GM12878 (cell line): ENCODE measurements at regions of chr6 and their contacts with region 1.

Region 1: GRCh38 chr6:30130887-30131862 is 4.8 kb upstream of the TRIM40 start:
- DNase-seq: peak; percentile 32
- ATAC-seq: peak; percentile 97
- H3K4me3 ChIP-seq: no peak overlapping the region
- H3K27ac ChIP-seq: no peak overlapping the region
- H3K4me1 ChIP-seq: peaks cover 5% of the 10 kb centered on the region
- H3K27me3 ChIP-seq: peaks cover 4 to 10% of the 10 kb centered on the region in 2 experiments
- CTCF ChIP-seq: peak; percentile 98 to 100 (median 100); a peak in 5 of 6 replicates
- EP300 ChIP-seq: no peak
- POLR2A ChIP-seq: no peak
- RAD21 ChIP-seq: peak; percentile 81

Region 2: DNA sequence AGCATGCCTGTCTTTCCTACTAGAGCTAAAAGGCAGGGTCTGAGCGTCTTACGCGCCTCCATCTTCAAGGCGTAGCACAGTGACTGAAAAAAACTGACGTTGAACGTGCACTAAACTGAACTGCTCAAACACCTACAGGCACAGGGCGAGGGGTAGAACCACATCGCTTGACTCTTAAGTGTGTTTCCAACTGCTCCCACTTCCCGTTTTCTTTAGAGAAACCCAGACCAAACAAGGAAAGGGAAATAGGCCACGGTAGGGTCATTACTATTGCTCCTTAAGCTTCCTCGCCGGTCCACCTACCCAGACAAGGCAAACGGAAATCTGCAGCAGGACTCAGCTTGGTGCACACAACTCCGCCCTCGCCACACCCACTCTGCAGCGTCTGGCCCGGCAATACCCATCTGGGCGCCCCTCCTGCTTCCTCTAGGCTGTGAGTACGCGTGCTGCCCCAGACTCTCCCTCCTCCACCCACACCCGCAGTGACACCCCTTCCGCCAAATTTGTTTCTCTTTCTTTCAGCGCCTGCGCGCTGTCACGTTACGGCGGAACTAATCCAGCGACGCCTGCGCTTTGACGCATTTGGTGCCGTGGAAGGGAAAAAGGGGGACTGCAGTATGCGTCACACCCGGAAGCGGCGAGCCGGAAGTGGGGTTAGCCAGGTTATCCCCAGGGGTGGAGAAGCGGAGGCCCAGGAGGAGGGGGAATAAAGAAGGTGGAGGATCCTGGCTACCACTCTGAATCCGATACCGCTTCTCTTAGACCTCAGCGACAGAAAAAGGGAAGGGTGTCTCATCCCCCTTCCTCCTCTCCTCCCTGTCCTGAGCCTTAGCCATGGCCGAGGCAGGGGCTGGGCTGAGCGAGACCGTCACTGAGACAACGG is 64.4 kb before region 1 on chr6 and contains the start of gene PPP1R11:
- CTCF ChIA-PET with region 1: interaction called, 11 read pairs
- POLR2A ChIA-PET with region 1: interaction called, 4 read pairs
- RAD21 ChIA-PET with region 1: interaction called, 14 read pairs
- SMC1A ChIA-PET with region 1: interaction called, 15 read pairs
- in situ Hi-C with region 1: no loop called
- intact Hi-C with region 1: no loop called
- DNase-seq: peak; percentile 99
- ATAC-seq: peak; percentile 99
- H3K4me3 ChIP-seq: peak within 1 kb of the TSS; percentile 84
- H3K27ac ChIP-seq: peak within 1 kb of the TSS; percentile 88
- H3K4me1 ChIP-seq: no peaks in the 10 kb centered on the region
- H3K27me3 ChIP-seq: peaks cover 0 to 3% of the 10 kb centered on the region in 2 experiments; a peak in 2 of 4 replicates
- CTCF ChIP-seq: no peak
- EP300 ChIP-seq: peak in 1 of 2 experiments; percentile 63; a peak in 2 of 4 replicates
- POLR2A ChIP-seq: peak; percentile 91
- RAD21 ChIP-seq: no peak
- polyA plus RNA-seq, gene PPP1R11: 12.6 to 13.4 TPM

Region 3: DNA sequence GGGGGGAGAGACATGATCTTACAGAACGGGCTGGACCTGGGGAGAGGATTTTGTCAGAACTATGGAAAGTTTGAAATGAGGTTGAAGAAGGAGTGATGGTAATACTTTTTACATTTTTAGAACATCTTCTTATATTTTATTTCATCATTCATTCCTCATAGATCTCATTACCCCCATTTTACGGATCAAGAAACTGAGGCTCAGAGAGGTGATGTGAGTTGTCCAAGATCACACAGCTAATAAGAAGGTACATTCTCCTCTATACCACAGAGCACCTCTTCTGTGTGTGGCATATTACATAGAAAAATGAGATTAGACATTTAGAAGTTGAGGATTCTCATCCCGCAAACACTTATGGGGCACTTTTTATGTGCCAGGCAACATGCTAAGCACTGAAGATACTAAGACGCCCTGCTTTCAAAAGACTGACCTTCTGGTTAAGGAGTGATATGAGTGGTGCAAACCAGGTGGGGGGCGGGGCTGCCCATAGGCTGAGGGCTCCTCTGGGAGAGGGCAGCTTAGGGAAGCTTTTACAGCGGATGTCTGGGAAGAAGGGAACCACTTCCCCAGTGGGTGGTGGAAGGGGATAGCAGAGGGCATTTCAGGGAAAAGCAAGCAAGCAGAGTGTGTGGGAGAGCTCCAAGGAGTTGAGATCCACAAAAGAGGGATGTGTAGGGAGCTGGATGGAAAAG is 38.2 kb before region 1 on chr6:
- CTCF ChIA-PET with region 1: interaction called, 16 read pairs
- POLR2A ChIA-PET with region 1: interaction called, 8 read pairs
- RAD21 ChIA-PET with region 1: interaction called, 6 read pairs
- SMC1A ChIA-PET with region 1: interaction called, 13 read pairs
- in situ Hi-C with region 1: no loop called
- intact Hi-C with region 1: no loop called
- DNase-seq: no peak
- ATAC-seq: no peak
- H3K4me3 ChIP-seq: no peak overlapping the region
- H3K27ac ChIP-seq: no peak overlapping the region
- H3K4me1 ChIP-seq: no peaks in the 10 kb centered on the region
- H3K27me3 ChIP-seq: peaks cover 3 to 4% of the 10 kb centered on the region in 2 experiments; a peak in 2 of 4 replicates
- CTCF ChIP-seq: no peak
- EP300 ChIP-seq: no peak
- POLR2A ChIP-seq: no peak
- RAD21 ChIP-seq: no peak

Region 4: GRCh38 chr6:30113003-30113759 is 18.0 kb before region 1 on chr6 and contains the start of gene TRIM31:
- CTCF ChIA-PET with region 1: interaction called, 96 read pairs
- POLR2A ChIA-PET with region 1: interaction called, 43 read pairs
- RAD21 ChIA-PET with region 1: interaction called, 333 read pairs
- SMC1A ChIA-PET with region 1: interaction called, 647 read pairs
- in situ Hi-C with region 1: no loop called
- intact Hi-C with region 1: no loop called
- DNase-seq: peak; percentile 55
- ATAC-seq: peak; percentile 90
- H3K4me3 ChIP-seq: no peak within 1 kb of the TSS
- H3K27ac ChIP-seq: 0 out of 2 replicates have a peak within 1 kb of the TSS, but pooled peaks have one; percentile 11
- H3K4me1 ChIP-seq: peaks cover 22% of the 10 kb centered on the region
- H3K27me3 ChIP-seq: no peaks in the 10 kb centered on the region; a peak in 1 of 4 replicates
- CTCF ChIP-seq: no peak
- EP300 ChIP-seq: 0 out of 4 replicates have a peak, but pooled peaks of 1 of the 2 experiments have one; percentile 39
- POLR2A ChIP-seq: no peak
- RAD21 ChIP-seq: no peak
- polyA plus RNA-seq, gene TRIM31: 0.09 TPM in 1 of 2 experiments, not detected in the other

Region 5: GRCh38 chr6:30143780-30144179 is 12.6 kb after region 1 on chr6:
- CTCF ChIA-PET with region 1: interaction called, 12 read pairs
- POLR2A ChIA-PET with region 1: no interaction called
- RAD21 ChIA-PET with region 1: interaction called, 4 read pairs
- SMC1A ChIA-PET with region 1: interaction called, 14 read pairs
- in situ Hi-C with region 1: no loop called
- intact Hi-C with region 1: no loop called
- DNase-seq: no peak
- ATAC-seq: no peak
- H3K4me3 ChIP-seq: no peak overlapping the region
- H3K27ac ChIP-seq: no peak overlapping the region
- H3K4me1 ChIP-seq: no peaks in the 10 kb centered on the region; the same call in 1 of the 2 replicates
- H3K27me3 ChIP-seq: peaks cover 2 to 3% of the 10 kb centered on the region in 2 experiments; a peak in 2 of 4 replicates
- CTCF ChIP-seq: no peak
- EP300 ChIP-seq: no peak
- POLR2A ChIP-seq: no peak
- RAD21 ChIP-seq: no peak

Region 6: DNA sequence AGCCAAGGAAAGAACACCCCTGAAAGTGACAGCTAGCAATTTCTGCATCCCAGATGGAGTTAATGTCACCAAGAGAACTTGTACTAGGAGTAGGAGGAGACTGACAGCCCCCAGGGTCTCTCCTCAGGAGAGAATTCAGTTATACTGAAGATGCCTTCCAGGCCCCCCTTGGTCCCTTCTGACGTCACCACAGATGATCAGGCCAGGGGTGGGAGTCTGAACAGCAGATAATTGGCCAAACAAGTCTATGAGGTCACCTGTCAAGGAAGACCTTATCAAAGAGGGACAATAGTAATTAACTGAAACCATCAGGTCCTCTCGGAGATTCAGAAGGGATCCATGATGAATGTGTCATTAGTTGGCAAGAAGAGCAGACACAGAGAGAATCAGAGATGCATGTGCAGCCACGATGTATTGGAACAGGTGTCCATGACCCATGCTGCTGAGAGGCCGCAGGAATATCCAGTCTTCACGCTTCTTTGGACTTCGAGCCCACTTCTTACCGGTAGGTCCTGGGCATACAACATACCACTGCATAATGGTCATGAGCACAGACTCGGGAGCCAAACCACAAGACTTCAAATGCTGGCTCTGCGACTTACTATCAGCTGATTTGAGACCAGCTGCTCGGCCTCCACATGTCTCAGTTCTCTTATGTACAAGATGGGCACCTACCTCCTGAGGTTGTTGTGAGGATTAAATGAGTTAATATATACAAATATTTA is 19.7 kb after region 1 on chr6:
- CTCF ChIA-PET with region 1: interaction called, 12 read pairs
- POLR2A ChIA-PET with region 1: no interaction called
- RAD21 ChIA-PET with region 1: interaction called, 3 read pairs
- SMC1A ChIA-PET with region 1: interaction called, 3 read pairs
- in situ Hi-C with region 1: no loop called
- intact Hi-C with region 1: no loop called
- DNase-seq: no peak
- ATAC-seq: no peak
- H3K4me3 ChIP-seq: no peak overlapping the region
- H3K27ac ChIP-seq: no peak overlapping the region
- H3K4me1 ChIP-seq: no peaks in the 10 kb centered on the region; the same call in 1 of the 2 replicates
- H3K27me3 ChIP-seq: peaks cover 0 to 1% of the 10 kb centered on the region in 2 experiments; a peak in 2 of 4 replicates
- CTCF ChIP-seq: no peak
- EP300 ChIP-seq: no peak
- POLR2A ChIP-seq: no peak
- RAD21 ChIP-seq: no peak

Region 7: GRCh38 chr6:30169658-30170614 is 38.8 kb after region 1 on chr6:
- CTCF ChIA-PET with region 1: interaction called, 28 read pairs
- POLR2A ChIA-PET with region 1: no interaction called
- RAD21 ChIA-PET with region 1: interaction called, 6 read pairs
- SMC1A ChIA-PET with region 1: interaction called, 8 read pairs
- in situ Hi-C with region 1: no loop called
- intact Hi-C with region 1: loop called (anchors 2 kb)
- DNase-seq: peak; percentile 20
- ATAC-seq: peak; percentile 93
- H3K4me3 ChIP-seq: no peak overlapping the region
- H3K27ac ChIP-seq: no peak overlapping the region
- H3K4me1 ChIP-seq: no peaks in the 10 kb centered on the region
- H3K27me3 ChIP-seq: peaks cover 8 to 20% of the 10 kb centered on the region in 2 experiments
- CTCF ChIP-seq: peak; percentile 74 to 81 (median 76)
- EP300 ChIP-seq: no peak
- POLR2A ChIP-seq: no peak
- RAD21 ChIP-seq: peak; percentile 90